Endothelial cell of umbilical vein (primary cell): ENCODE measurements at regions of chr1 and their contacts with region 1.

Region 1: DNA sequence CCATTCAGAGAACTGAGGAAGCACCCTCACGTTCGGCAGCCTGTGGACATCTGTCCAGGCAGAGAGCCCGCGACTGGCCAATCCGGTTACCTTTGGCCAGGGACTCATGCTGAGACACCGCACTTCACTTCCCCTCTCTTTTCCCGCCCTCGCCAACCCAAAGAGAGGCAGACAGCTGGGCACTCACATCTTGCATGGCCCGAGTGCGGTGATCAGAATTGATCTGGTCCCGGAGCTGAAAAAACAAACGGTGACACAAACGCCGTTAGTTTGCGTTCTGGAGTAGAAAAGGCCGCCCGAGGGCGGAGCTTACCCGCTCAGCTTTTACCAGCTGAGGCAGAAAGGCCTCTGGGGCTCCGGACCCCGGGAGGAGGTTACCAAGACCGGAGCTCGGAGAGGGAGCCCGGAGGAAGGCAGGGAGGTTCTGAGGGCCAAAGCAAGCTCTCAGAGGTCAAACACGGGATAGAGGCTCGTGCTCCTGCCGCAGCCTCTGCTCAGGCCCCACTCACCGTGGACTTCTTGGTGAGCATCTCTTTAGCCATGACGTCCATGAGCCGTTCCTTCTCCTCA is 376 bp downstream of the SF3A3 start:
- DNase-seq: no peak
- H3K4me3 ChIP-seq: peak overlapping the region; percentile 78 to 81 (median 78)
- H3K27ac ChIP-seq: peak overlapping the region; percentile 24
- H3K4me1 ChIP-seq: peaks cover 9% of the 10 kb centered on the region
- H3K27me3 ChIP-seq: no peaks in the 10 kb centered on the region
- CTCF ChIP-seq: no peak
- POLR2A ChIP-seq: no peak

Region 2: GRCh38 chr1:38012363-38013226 is 23.1 kb after region 1 on chr1 and contains the start of gene UTP11:
- CTCF ChIA-PET with region 1: interaction called, 14 read pairs
- POLR2A ChIA-PET with region 1: interaction called, 4 read pairs
- dilution Hi-C with region 1: no loop called
- intact Hi-C with region 1: loop called (anchors 1 kb)
- DNase-seq: peak; percentile 99
- H3K4me3 ChIP-seq: peak within 1 kb of the TSS; percentile 27 to 81 (median 58)
- H3K27ac ChIP-seq: peak within 1 kb of the TSS; percentile 85
- H3K4me1 ChIP-seq: peaks cover 49% of the 10 kb centered on the region
- H3K27me3 ChIP-seq: no peaks in the 10 kb centered on the region
- CTCF ChIP-seq: no peak
- POLR2A ChIP-seq: peak; percentile 90
- total RNA-seq, gene UTP11: 54.1 and 60.1 TPM in 2 replicates

Region 3: DNA sequence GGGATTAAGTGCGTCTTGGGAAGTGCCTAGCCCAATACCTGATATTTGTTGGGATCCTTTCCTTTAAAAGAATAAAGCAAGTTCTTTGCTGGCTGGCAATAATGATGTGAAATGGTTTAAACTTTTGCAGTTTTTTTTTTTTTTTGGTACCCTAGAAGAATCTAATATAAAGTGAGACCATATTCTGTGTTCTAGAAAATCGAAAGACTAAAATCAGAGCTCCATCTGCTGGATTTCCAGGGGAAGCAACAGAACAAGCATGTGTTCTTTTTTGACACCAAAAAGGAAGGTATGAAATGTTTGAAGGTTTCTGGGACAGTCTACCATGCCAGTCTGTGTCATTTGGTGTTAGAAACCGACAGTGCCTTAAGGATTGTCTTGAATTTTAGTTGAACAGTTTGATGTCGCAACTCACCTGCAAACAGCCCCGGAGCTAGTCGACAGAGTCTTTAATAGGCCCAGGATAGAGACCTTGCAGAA is 29.5 kb after region 1 on chr1:
- CTCF ChIA-PET with region 1: interaction called, 37 read pairs
- POLR2A ChIA-PET with region 1: interaction called, 3 read pairs
- dilution Hi-C with region 1: no loop called
- intact Hi-C with region 1: loop called (anchors 1 kb)
- DNase-seq: peak; percentile 28
- H3K4me3 ChIP-seq: no peak overlapping the region
- H3K27ac ChIP-seq: no peak overlapping the region
- H3K4me1 ChIP-seq: peaks cover 32% of the 10 kb centered on the region
- H3K27me3 ChIP-seq: no peaks in the 10 kb centered on the region
- CTCF ChIP-seq: peak; percentile 49 to 55
- POLR2A ChIP-seq: no peak